ENCODE measurements at regions of chr12 and their contacts with region 1.

Region 1: GRCh38 chr12:102051484-102051883 is 10.3 kb downstream of the WASHC3 start:
- DNase-seq: no peak
- H3K4me3 ChIP-seq: no peak overlapping the region
- H3K4me3 Mint-ChIP-seq: no peak overlapping the region
- H3K27ac Mint-ChIP-seq: peak overlapping the region; percentile 59
- H3K4me1 ChIP-seq: peaks cover 17% of the 10 kb centered on the region
- H3K4me1 Mint-ChIP-seq: peaks cover 25% of the 10 kb centered on the region
- H3K27me3 ChIP-seq: no peaks in the 10 kb centered on the region
- H3K27me3 Mint-ChIP-seq: no peaks in the 10 kb centered on the region
- CTCF ChIP-seq: no peak

Region 2: GRCh38 chr12:101634724-101635123 is 416.8 kb before region 1 on chr12:
- CTCF ChIA-PET with region 1: no interaction called
- POLR2A ChIA-PET with region 1: no interaction called
- intact Hi-C with region 1: no loop called
- DNase-seq: no peak
- H3K4me3 ChIP-seq: no peak overlapping the region
- H3K4me3 Mint-ChIP-seq: no peak overlapping the region
- H3K27ac Mint-ChIP-seq: no peak overlapping the region
- H3K4me1 ChIP-seq: no peaks in the 10 kb centered on the region
- H3K4me1 Mint-ChIP-seq: no peaks in the 10 kb centered on the region
- H3K27me3 ChIP-seq: no peaks in the 10 kb centered on the region
- H3K27me3 Mint-ChIP-seq: no peaks in the 10 kb centered on the region
- CTCF ChIP-seq: no peak

Region 3: DNA sequence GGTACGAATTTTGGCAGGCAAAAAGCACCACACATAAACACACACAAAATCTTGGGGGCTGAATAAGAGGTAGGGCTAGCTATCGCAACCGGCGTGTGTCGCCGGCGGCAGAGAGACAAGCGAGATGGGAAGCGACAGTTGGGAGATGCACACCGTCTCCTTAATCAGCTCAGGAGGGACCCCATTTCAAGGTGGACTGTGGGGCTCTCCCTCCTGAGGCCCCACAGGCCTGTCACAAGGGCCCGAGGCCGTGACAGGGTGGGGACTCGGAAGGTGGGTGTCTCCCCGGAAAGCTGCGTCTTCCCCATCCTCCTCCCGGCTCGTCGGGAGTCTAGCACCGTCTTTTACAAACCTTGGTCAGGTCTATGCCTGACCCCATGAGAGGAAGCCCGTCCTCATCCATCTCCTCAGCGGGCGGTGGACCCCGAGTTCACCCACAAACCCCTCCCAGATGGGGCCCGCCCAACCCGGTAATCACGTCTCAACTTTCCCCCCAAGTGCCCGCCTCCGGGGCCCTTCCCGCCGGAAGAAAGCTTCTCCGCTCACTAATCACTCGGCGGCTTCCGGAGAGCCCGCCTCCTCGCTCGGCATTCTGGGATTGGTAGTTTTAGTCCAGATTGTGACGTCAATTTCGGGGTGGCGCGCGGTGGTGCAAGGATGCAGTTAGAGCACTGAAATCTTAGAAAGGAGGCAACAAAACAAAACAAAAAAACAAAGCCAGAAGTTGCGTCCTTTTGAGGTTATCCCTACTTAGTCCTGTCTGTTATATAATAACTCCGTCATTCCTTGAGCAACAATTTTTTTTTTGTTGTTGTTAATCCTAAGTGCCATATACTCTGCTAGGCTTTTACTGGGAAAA is 10.3 kb after region 1 on chr12 and contains the start of gene WASHC3:
- CTCF ChIA-PET with region 1: no interaction called
- POLR2A ChIA-PET with region 1: interaction called, 4 read pairs
- intact Hi-C with region 1: loop called (anchors 1 kb)
- DNase-seq: peak; percentile 93 to 94
- H3K4me3 ChIP-seq: peak within 1 kb of the TSS; percentile 46
- H3K4me3 Mint-ChIP-seq: peak within 1 kb of the TSS; percentile 99
- H3K27ac Mint-ChIP-seq: peak within 1 kb of the TSS; percentile 94
- H3K4me1 ChIP-seq: peaks cover 20% of the 10 kb centered on the region
- H3K4me1 Mint-ChIP-seq: peaks cover 8% of the 10 kb centered on the region
- H3K27me3 ChIP-seq: no peaks in the 10 kb centered on the region
- H3K27me3 Mint-ChIP-seq: no peaks in the 10 kb centered on the region
- CTCF ChIP-seq: no peak
- total RNA-seq, gene WASHC3: 40.4 and 43.2 TPM in 2 replicates

Region 4: GRCh38 chr12:102294568-102295235 is 243.2 kb after region 1 on chr12:
- CTCF ChIA-PET with region 1: no interaction called
- POLR2A ChIA-PET with region 1: no interaction called
- intact Hi-C with region 1: no loop called
- DNase-seq: no peak
- H3K4me3 ChIP-seq: no peak overlapping the region
- H3K4me3 Mint-ChIP-seq: no peak overlapping the region
- H3K27ac Mint-ChIP-seq: no peak overlapping the region
- H3K4me1 ChIP-seq: peaks cover 11% of the 10 kb centered on the region
- H3K4me1 Mint-ChIP-seq: no peaks in the 10 kb centered on the region
- H3K27me3 ChIP-seq: no peaks in the 10 kb centered on the region
- H3K27me3 Mint-ChIP-seq: peaks cover 3% of the 10 kb centered on the region
- CTCF ChIP-seq: no peak

Measured in Caco-2 (cell line).